ENCODE measurements at regions of chr6 and their contacts with region 1.

Region 1: DNA sequence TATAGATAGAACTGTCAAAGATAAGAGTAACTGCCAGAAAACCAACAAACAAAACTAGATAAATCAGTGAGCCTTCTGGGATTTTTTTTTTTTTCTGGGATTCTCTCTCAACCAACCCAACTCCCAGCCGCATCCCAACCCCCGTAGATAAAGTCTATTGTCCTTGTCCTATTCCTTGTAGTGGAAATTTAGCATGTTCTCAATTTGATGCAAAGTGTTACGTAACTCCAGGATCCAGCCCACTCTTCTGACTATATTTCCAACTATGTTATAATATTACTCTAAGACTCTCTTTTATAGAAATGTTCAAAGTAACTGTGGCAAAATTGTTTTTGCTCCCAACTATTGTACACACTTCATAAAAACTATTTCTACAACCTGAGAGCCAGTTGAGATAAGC is 15.4 kb upstream of the CDYL start:
- DNase-seq: no peak
- ATAC-seq: no peak
- H3K4me3 ChIP-seq: no peak overlapping the region
- H3K27ac ChIP-seq: no peak overlapping the region
- H3K4me1 ChIP-seq: peaks cover 4% of the 10 kb centered on the region
- H3K27me3 ChIP-seq: peaks cover 2% of the 10 kb centered on the region; the same call in 1 of the 2 replicates
- CTCF ChIP-seq: no peak
- POLR2A ChIP-seq: no peak
- RAD21 ChIP-seq: no peak

Region 2: GRCh38 chr6:4892785-4893485 is 132.2 kb after region 1 on chr6:
- CTCF ChIA-PET with region 1: no interaction called
- POLR2A ChIA-PET with region 1: interaction called, 17 read pairs
- dilution Hi-C with region 1: no loop called
- in situ Hi-C with region 1: no loop called
- intact Hi-C with region 1: no loop called
- DNase-seq: no peak
- ATAC-seq: no peak
- H3K4me3 ChIP-seq: no peak overlapping the region
- H3K27ac ChIP-seq: no peak overlapping the region
- H3K4me1 ChIP-seq: no peaks in the 10 kb centered on the region
- H3K27me3 ChIP-seq: no peaks in the 10 kb centered on the region
- CTCF ChIP-seq: no peak
- POLR2A ChIP-seq: no peak
- RAD21 ChIP-seq: no peak

Region 3: GRCh38 chr6:5044866-5045265 is 284.1 kb after region 1 on chr6:
- CTCF ChIA-PET with region 1: no interaction called
- POLR2A ChIA-PET with region 1: no interaction called
- dilution Hi-C with region 1: no loop called
- in situ Hi-C with region 1: no loop called
- intact Hi-C with region 1: no loop called
- DNase-seq: no peak
- ATAC-seq: no peak
- H3K4me3 ChIP-seq: no peak overlapping the region
- H3K27ac ChIP-seq: no peak overlapping the region
- H3K4me1 ChIP-seq: peaks cover 2% of the 10 kb centered on the region
- H3K27me3 ChIP-seq: no peaks in the 10 kb centered on the region
- CTCF ChIP-seq: no peak
- POLR2A ChIP-seq: no peak
- RAD21 ChIP-seq: no peak

Region 4: DNA sequence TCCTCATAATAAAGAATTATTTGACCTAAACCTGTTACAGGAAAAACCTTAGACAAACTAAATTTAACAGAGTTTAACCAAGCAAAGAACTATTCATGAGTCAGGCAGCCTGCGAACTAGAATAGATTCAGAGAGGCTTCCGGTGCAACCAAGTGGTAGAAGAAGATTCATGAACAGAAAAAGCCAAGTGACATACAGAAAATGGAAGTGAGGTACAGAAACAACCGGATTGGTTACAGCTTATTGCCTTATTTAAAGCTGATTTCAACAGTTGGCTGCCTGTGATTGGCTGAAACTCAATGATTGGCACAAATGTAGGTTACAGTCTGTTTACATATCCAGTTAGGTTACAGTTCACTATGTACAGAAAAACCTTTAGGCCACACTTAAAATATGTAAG is 334.5 kb after region 1 on chr6:
- CTCF ChIA-PET with region 1: no interaction called
- POLR2A ChIA-PET with region 1: no interaction called
- dilution Hi-C with region 1: no loop called
- in situ Hi-C with region 1: no loop called
- intact Hi-C with region 1: loop called (anchors 5 kb)
- DNase-seq: peak; percentile 71
- ATAC-seq: 0 out of 2 replicates have a peak, but pooled peaks have one; percentile 12
- H3K4me3 ChIP-seq: no peak overlapping the region
- H3K27ac ChIP-seq: no peak overlapping the region
- H3K4me1 ChIP-seq: peaks cover 5% of the 10 kb centered on the region; the same call in 1 of the 2 replicates
- H3K27me3 ChIP-seq: peaks cover 55% of the 10 kb centered on the region
- CTCF ChIP-seq: no peak
- POLR2A ChIP-seq: no peak
- RAD21 ChIP-seq: no peak

Measured in IMR-90 (cell line).